Activated CD4-positive, alpha-beta memory T cell treated with anti-CD3 and anti-CD28 coated beads for 36 hours (primary cell): ENCODE measurements at regions of chr22 and their contacts with region 1.

Region 1: GRCh38 chr22:30763815-30764686 is 69.4 kb downstream of the OSBP2 start:
- DNase-seq: peak; percentile 66
- H3K4me3 Mint-ChIP-seq: no peak overlapping the region
- H3K27ac Mint-ChIP-seq: no peak overlapping the region
- H3K4me1 Mint-ChIP-seq: no peaks in the 10 kb centered on the region
- H3K27me3 Mint-ChIP-seq: no peaks in the 10 kb centered on the region

Region 2: GRCh38 chr22:30890686-30891442 is 126.8 kb after region 1 on chr22:
- CTCF ChIA-PET with region 1: interaction called, 19 read pairs
- POLR2A ChIA-PET with region 1: no interaction called
- intact Hi-C with region 1: no loop called
- DNase-seq: peak; percentile 43
- H3K4me3 Mint-ChIP-seq: no peak overlapping the region
- H3K27ac Mint-ChIP-seq: no peak overlapping the region
- H3K4me1 Mint-ChIP-seq: peaks cover 25% of the 10 kb centered on the region
- H3K27me3 Mint-ChIP-seq: no peaks in the 10 kb centered on the region

Region 3: DNA sequence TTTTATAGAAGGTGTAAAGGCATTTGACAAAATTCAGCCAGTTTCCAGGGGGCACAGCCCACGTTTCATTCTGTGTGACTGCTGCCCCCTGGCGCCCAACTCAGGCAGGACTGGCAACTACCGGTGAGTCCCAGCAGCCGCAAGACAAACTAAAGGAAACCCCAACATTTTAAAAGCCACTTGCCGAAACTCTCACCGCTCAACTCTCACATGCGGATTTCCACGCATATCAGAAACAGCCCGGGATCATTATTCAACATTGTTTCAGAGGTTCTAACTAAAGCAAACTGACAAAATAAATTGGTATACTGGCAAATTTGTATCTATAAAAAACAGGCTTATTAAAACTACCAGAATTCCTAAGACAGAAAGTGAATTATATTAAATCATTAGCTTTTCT is 156.4 kb after region 1 on chr22:
- CTCF ChIA-PET with region 1: interaction called, 60 read pairs
- POLR2A ChIA-PET with region 1: no interaction called
- intact Hi-C with region 1: loop called (anchors 1 kb)
- DNase-seq: peak; percentile 87
- H3K4me3 Mint-ChIP-seq: peak overlapping the region; percentile 40
- H3K27ac Mint-ChIP-seq: peak overlapping the region; percentile 3
- H3K4me1 Mint-ChIP-seq: peaks cover 12% of the 10 kb centered on the region
- H3K27me3 Mint-ChIP-seq: no peaks in the 10 kb centered on the region